ENCODE measurements at regions of chr15 and their contacts with region 1.

Region 1: DNA sequence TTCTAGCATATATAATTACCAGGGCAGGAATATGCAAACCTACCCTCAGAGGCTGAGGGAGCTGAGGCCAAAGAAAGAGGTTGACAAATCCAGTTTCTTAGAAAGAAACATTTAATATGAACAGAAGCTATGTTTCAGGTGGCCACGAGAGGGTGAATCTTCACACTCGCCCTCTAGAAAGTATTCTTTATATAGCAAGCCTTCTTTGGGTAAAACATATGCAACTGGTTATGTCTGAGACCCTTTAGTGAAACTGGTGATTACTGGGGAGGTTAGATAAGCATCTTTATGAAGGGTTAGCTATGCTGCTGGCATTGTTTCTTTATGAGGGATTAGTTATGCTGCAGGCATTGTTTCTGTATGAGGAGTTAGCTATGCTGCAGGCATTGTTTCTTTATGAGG is 50.7 kb upstream of the GOLGA6L2 start:
- DNase-seq: no peak
- ATAC-seq: no peak
- H3K4me3 ChIP-seq: no peak overlapping the region
- H3K27ac ChIP-seq: no peak overlapping the region
- H3K4me1 ChIP-seq: no peaks in the 10 kb centered on the region
- H3K27me3 ChIP-seq: no peaks in the 10 kb centered on the region; a peak in 1 of 5 replicates
- CTCF ChIP-seq: 0 out of 2 replicates have a peak, but pooled peaks have one; percentile 21
- EP300 ChIP-seq: no peak
- POLR2A ChIP-seq: no peak
- RAD21 ChIP-seq: no peak

Region 2: DNA sequence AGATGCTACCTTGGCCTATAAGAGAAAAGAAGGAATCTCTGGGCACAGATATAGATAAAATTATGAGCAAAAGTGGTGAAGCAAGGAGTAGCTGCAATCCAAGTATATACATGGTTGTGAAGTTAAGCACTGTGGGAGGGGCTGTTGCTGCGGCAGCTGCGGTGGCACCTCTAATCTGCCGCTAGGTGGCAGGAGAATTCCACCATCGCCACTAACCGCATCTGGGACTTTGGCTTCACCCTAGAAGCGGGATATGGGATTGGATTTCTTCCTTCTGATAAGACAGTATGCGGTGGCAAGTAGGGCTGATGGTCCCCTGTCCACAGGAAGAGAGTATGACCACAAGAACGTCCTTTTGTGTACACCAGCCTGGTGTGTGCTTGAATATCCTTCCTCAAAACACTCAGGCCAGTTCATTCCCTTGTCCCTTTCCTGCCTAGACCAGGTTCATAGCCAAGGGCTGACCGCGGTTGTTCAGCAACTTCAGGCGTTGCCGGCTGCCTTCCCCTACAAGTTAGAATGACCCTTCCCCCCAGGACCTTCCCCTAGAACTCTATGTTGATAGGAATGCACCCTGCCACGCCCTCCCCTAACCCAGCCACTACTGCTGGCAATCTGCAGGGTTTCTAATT is 144.8 kb after region 1 on chr15:
- CTCF ChIA-PET with region 1: no interaction called
- POLR2A ChIA-PET with region 1: no interaction called
- in situ Hi-C with region 1: loop called (anchors 25 kb)
- intact Hi-C with region 1: no loop called
- DNase-seq: peak; percentile 51
- ATAC-seq: peak; percentile 93
- H3K4me3 ChIP-seq: no peak overlapping the region
- H3K27ac ChIP-seq: no peak overlapping the region
- H3K4me1 ChIP-seq: no peaks in the 10 kb centered on the region
- H3K27me3 ChIP-seq: peaks cover 2% of the 10 kb centered on the region in 2 experiments; a peak in 2 of 5 replicates
- CTCF ChIP-seq: peak; percentile 92
- EP300 ChIP-seq: no peak
- POLR2A ChIP-seq: no peak
- RAD21 ChIP-seq: peak; percentile 85

Measured in HepG2 (cell line).